ENCODE measurements at regions of chr3 and their contacts with region 1.

Region 1: GRCh38 chr3:141487521-141488252 is 860 bp downstream of the RASA2 start:
- DNase-seq: peak; percentile 85
- H3K4me3 Mint-ChIP-seq: peak overlapping the region; percentile 93
- H3K27ac Mint-ChIP-seq: peak overlapping the region; percentile 93
- H3K4me1 Mint-ChIP-seq: peaks cover 66% of the 10 kb centered on the region
- H3K27me3 Mint-ChIP-seq: peaks cover 2% of the 10 kb centered on the region

Region 2: GRCh38 chr3:141412087-141412935 is 75.4 kb before region 1 on chr3:
- intact Hi-C with region 1: loop called (anchors 5 kb)
- DNase-seq: peak; percentile 55
- H3K4me3 Mint-ChIP-seq: peak overlapping the region; percentile 85
- H3K27ac Mint-ChIP-seq: peak overlapping the region; percentile 98
- H3K4me1 Mint-ChIP-seq: peaks cover 61% of the 10 kb centered on the region
- H3K27me3 Mint-ChIP-seq: no peaks in the 10 kb centered on the region

Region 3: DNA sequence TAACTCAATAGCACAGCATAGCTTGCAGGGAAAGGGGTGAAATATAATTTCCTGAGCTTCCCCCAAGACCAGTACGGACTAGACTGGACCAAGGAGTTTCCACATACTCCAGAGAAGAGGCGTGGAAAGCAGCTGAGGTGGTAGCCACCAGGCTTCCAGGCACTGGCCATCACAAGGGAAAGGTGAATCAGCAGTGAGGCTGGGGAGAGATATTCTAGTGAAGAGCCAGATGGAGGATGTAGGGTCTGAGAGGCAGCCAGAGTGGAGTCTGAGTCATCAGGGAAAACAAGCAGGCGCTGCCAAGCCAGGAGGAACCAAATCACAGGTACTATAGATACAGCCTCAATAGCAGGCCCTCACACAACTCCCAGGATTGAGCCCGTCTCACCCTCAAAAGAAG is 10.5 kb before region 1 on chr3:
- intact Hi-C with region 1: loop called (anchors 1 kb)
- DNase-seq: no peak
- H3K4me3 Mint-ChIP-seq: no peak overlapping the region
- H3K27ac Mint-ChIP-seq: no peak overlapping the region
- H3K4me1 Mint-ChIP-seq: peaks cover 43% of the 10 kb centered on the region
- H3K27me3 Mint-ChIP-seq: peaks cover 17% of the 10 kb centered on the region

Region 4: DNA sequence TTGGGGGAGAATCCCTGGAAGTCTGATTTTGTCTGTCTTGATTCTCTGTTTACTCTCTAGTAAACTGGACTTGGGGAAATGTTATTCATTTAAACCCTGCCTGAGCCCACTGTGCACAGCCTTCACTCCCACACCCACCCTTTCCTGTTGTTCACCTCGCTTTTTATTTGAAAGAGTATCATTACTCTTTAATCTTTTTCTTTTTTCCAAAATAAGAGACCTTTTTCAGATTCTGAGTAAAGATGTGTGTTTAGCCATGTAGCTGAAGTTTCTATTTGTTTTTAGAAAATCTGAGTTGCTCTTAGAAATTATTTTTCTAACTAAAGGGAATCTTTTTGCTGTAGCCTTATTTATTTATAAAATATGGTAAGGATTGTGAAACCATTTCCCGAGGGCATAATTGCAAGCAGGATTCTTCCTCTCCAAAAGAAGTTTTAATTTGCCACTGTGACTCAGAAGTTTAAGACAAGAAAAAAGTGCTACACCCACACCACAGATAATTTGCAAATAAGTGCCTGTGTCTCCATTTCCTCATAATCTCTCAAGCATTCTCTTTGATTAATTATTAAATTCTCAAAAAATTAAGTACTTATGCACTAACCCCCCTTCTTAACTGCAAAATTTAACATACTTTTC is 42.6 kb after region 1 on chr3:
- intact Hi-C with region 1: loop called (anchors 1 kb)
- DNase-seq: no peak
- H3K4me3 Mint-ChIP-seq: peak overlapping the region; percentile 27
- H3K27ac Mint-ChIP-seq: peak overlapping the region; percentile 77
- H3K4me1 Mint-ChIP-seq: peaks cover 59% of the 10 kb centered on the region
- H3K27me3 Mint-ChIP-seq: no peaks in the 10 kb centered on the region

Region 5: GRCh38 chr3:141553055-141553454 is 65.4 kb after region 1 on chr3:
- intact Hi-C with region 1: loop called (anchors 1 kb)
- DNase-seq: peak; percentile 35
- H3K4me3 Mint-ChIP-seq: peak overlapping the region; percentile 38
- H3K27ac Mint-ChIP-seq: peak overlapping the region; percentile 93
- H3K4me1 Mint-ChIP-seq: peaks cover 52% of the 10 kb centered on the region
- H3K27me3 Mint-ChIP-seq: no peaks in the 10 kb centered on the region

Region 6: GRCh38 chr3:141796081-141796888 is 308.6 kb after region 1 on chr3:
- intact Hi-C with region 1: loop called (anchors 1 kb)
- DNase-seq: peak; percentile 74
- H3K4me3 Mint-ChIP-seq: peak overlapping the region; percentile 79
- H3K27ac Mint-ChIP-seq: peak overlapping the region; percentile 99
- H3K4me1 Mint-ChIP-seq: peaks cover 47% of the 10 kb centered on the region
- H3K27me3 Mint-ChIP-seq: peaks cover 3% of the 10 kb centered on the region

Region 7: GRCh38 chr3:141863491-141863890 is 375.8 kb after region 1 on chr3:
- intact Hi-C with region 1: no loop called
- DNase-seq: no peak
- H3K4me3 Mint-ChIP-seq: no peak overlapping the region
- H3K27ac Mint-ChIP-seq: no peak overlapping the region
- H3K4me1 Mint-ChIP-seq: peaks cover 6% of the 10 kb centered on the region
- H3K27me3 Mint-ChIP-seq: no peaks in the 10 kb centered on the region

Region 8: GRCh38 chr3:142165194-142165593 is 677.5 kb after region 1 on chr3:
- intact Hi-C with region 1: no loop called
- DNase-seq: no peak
- H3K4me3 Mint-ChIP-seq: no peak overlapping the region
- H3K27ac Mint-ChIP-seq: no peak overlapping the region
- H3K4me1 Mint-ChIP-seq: no peaks in the 10 kb centered on the region
- H3K27me3 Mint-ChIP-seq: no peaks in the 10 kb centered on the region

Region 9: GRCh38 chr3:142578327-142579223 is 1090.9 kb after region 1 on chr3 and contains the start of gene ATR:
- intact Hi-C with region 1: loop called (anchors 5 kb)
- DNase-seq: peak; percentile 96
- H3K4me3 Mint-ChIP-seq: peak within 1 kb of the TSS; percentile 100
- H3K27ac Mint-ChIP-seq: peak within 1 kb of the TSS; percentile 100
- H3K4me1 Mint-ChIP-seq: peaks cover 46% of the 10 kb centered on the region
- H3K27me3 Mint-ChIP-seq: peaks cover 10% of the 10 kb centered on the region
- total RNA-seq, gene ATR: 27.0 and 35.5 TPM in 2 replicates